Mammary epithelial cell (primary cell): ENCODE measurements at regions of chr3 and their contacts with region 1.

Region 1: GRCh38 chr3:177197041-177197727 is at the start of gene TBL1XR1:
- DNase-seq: peak; percentile 88
- H3K4me3 ChIP-seq: peak within 1 kb of the TSS; percentile 55 to 98 (median 95)
- H3K27ac ChIP-seq: peak within 1 kb of the TSS; percentile 98
- H3K4me1 ChIP-seq: peaks cover 12% of the 10 kb centered on the region
- H3K27me3 ChIP-seq: no peaks in the 10 kb centered on the region
- CTCF ChIP-seq: no peak
- total RNA-seq, gene TBL1XR1: 157 to 187 TPM

Region 2: DNA sequence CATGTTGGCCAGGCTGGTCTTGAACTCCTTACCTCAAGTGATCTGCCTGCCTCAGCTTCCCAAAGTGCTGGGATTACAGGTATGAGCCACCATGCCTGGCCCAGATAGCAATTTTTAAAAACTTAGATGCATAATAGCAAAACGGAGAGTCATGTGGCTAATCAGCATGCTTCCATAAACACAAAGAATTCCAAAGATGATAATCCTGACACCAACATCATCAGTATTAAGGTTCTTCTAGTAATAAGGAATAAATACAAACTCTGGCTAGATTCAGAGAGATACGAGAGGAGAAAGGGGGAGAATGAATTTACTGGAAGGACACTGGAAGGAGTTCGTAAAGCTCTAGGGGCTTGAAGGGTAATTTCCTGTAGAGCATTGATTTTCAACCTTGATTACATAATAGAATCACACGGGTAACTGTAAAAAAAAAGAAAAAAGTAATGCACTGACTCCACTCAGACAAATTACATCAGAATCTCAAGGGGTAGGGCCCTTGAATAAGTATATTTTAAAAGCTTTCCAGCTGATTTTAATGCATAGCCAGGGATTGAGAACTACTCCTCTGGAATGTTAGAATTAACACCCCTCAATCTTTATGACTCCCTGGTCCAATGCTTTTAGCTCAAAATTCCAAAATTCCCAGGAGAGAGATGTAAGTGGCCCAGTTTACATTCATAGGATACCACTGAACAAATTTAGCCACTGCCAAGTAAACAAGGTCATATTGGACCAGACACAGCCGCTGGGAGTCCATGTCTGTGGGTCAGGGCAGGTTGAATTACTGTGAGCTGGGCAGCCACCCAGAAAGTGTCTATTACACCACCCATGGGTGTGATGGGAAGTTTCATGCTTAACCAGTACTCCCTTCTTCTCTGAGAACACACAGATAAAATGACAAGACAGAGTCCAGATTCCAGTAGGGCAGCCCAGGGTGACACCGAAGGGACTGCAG is 243.8 kb before region 1 on chr3:
- CTCF ChIA-PET with region 1: no interaction called
- dilution Hi-C with region 1: no loop called
- in situ Hi-C with region 1: no loop called
- intact Hi-C with region 1: loop called (anchors 10 kb)
- DNase-seq: no peak
- H3K4me3 ChIP-seq: no peak overlapping the region
- H3K27ac ChIP-seq: no peak overlapping the region
- H3K4me1 ChIP-seq: peaks cover 27% of the 10 kb centered on the region
- H3K27me3 ChIP-seq: no peaks in the 10 kb centered on the region
- CTCF ChIP-seq: no peak

Region 3: DNA sequence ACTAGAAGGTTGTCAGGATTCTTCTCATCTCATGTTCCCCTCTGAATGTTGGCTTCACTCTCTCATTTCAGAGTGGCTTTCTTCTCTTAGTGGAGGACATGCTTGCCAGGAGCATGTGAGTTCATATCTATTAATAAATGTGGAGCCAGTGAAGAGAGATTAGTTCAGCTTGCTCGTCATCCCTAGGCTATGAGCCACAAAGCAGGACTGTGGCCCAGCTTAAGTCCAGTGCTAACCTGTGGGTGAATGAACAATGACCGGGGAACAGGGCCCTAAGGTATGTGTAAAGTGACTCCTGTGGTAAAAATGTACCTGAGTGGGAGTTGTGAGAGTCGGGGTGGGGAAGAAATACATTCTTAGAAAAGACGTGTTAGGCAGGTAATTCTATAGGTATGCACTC is 97.0 kb after region 1 on chr3:
- CTCF ChIA-PET with region 1: no interaction called
- dilution Hi-C with region 1: no loop called
- in situ Hi-C with region 1: no loop called
- intact Hi-C with region 1: loop called (anchors 5 kb)
- DNase-seq: peak; percentile 96
- H3K4me3 ChIP-seq: no peak overlapping the region
- H3K27ac ChIP-seq: peak overlapping the region; percentile 98
- H3K4me1 ChIP-seq: peaks cover 23% of the 10 kb centered on the region
- H3K27me3 ChIP-seq: no peaks in the 10 kb centered on the region
- CTCF ChIP-seq: no peak

Region 4: GRCh38 chr3:177448987-177449975 is 252.1 kb after region 1 on chr3:
- CTCF ChIA-PET with region 1: no interaction called
- dilution Hi-C with region 1: no loop called
- in situ Hi-C with region 1: loop called in 1 of 2 experiments (anchors 25 kb)
- intact Hi-C with region 1: loop called (anchors 1 kb)
- DNase-seq: peak; percentile 100
- H3K4me3 ChIP-seq: no peak overlapping the region
- H3K27ac ChIP-seq: peak overlapping the region; percentile 99
- H3K4me1 ChIP-seq: peaks cover 51% of the 10 kb centered on the region
- H3K27me3 ChIP-seq: no peaks in the 10 kb centered on the region
- CTCF ChIP-seq: no peak

Region 5: DNA sequence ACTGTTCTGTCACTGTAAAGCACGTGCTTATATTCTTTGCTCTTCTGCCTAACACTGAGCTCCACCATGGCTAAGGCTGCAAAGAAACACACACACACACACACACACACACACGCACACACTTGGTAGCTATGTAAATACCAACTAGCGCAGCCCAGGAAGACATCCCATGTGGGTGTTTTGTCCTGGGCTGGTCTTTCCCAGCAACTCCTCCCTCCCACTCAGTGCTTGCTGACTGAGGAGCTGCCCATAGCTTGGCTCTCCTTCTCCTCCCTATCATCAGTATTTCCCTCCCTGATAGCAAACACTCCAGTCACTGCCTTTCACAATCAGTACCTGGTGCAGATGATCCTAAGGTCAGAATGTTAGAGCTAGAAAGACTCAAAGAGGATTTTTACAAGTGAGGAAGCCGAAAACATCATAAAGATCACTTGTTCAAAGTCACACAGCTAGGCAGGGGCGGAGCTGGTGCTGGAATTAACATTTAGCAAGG is 377.1 kb after region 1 on chr3:
- CTCF ChIA-PET with region 1: interaction called, 20 read pairs
- dilution Hi-C with region 1: no loop called
- in situ Hi-C with region 1: loop called in 1 of 2 experiments (anchors 25 kb)
- intact Hi-C with region 1: no loop called
- DNase-seq: peak; percentile 67
- H3K4me3 ChIP-seq: no peak overlapping the region
- H3K27ac ChIP-seq: no peak overlapping the region
- H3K4me1 ChIP-seq: peaks cover 12% of the 10 kb centered on the region
- H3K27me3 ChIP-seq: no peaks in the 10 kb centered on the region
- CTCF ChIP-seq: no peak

Region 6: DNA sequence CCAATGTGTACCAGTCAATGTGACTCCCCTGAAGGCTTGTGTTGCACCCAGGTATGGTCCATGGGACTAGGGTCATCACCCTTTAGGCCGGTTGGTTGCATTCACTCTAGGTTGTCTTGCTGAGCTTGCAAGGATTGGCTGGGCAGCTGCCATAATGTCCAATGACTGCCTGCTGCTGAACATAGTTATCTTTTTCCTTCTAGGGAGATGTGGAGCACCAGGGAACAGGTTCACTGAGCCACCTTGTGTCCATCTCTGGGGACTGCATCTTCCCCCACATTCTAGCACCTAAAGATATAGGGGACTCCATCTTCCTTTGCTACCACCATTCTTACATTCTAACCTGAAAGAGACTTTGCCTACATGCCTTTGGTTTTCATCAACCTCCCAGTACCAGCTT is 580.5 kb after region 1 on chr3:
- CTCF ChIA-PET with region 1: no interaction called
- dilution Hi-C with region 1: no loop called
- in situ Hi-C with region 1: no loop called
- intact Hi-C with region 1: loop called (anchors 1 kb)
- DNase-seq: peak; percentile 68
- H3K4me3 ChIP-seq: no peak overlapping the region
- H3K27ac ChIP-seq: no peak overlapping the region
- H3K4me1 ChIP-seq: peaks cover 25% of the 10 kb centered on the region
- H3K27me3 ChIP-seq: no peaks in the 10 kb centered on the region
- CTCF ChIP-seq: peak; percentile 77 to 84